ENCODE measurements at regions of chr6 and their contacts with region 1.

Region 1: DNA sequence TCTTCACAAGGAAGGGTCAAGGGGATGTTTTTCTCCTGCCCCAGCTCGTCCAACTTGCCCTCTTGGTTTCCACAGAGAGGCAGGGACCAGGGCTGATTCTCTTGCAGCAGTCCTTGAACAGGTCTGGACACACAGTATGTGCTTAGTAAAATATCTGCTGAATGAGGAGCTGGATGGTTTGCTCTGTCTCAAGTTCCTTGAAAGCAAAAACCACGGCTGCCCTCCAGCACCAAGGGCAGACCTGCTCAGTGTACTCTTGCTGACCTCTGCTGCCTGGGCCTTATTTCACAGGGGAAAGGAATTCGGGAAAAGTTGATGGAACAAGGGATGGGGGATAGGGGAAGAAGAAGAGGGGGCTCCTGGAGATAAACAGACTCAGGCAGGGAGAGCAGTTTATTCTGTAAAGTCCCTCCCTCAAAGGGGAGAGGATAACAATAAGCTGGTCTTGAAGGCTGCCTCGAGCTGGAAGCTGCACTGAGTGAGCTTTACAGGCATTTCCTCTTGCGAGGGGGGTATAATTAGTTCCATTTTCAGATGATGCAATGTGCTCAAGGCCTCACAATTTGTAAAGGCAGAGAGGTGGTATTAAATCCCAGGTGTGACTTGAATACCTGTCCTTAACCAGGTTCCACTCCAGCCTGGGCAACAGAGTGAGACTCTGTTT is 10.3 kb downstream of the KCNK5 start:
- DNase-seq: no peak
- ATAC-seq: peak; percentile 49
- H3K4me3 ChIP-seq: no peak overlapping the region
- H3K27ac ChIP-seq: peak overlapping the region; percentile 35
- H3K4me1 ChIP-seq: peaks cover 19% of the 10 kb centered on the region
- H3K27me3 ChIP-seq: no peaks in the 10 kb centered on the region
- CTCF ChIP-seq: peak in 1 of 3 experiments; percentile 21; a peak in 1 of 6 replicates
- EP300 ChIP-seq: no peak
- POLR2A ChIP-seq: no peak
- RAD21 ChIP-seq: no peak

Region 2: GRCh38 chr6:39104528-39104927 is 114.5 kb before region 1 on chr6:
- CTCF ChIA-PET with region 1: no interaction called
- POLR2A ChIA-PET with region 1: no interaction called
- RAD21 ChIA-PET with region 1: no interaction called
- SMC1A ChIA-PET with region 1: no interaction called
- in situ Hi-C with region 1: no loop called
- intact Hi-C with region 1: no loop called
- DNase-seq: no peak
- ATAC-seq: no peak
- H3K4me3 ChIP-seq: no peak overlapping the region
- H3K27ac ChIP-seq: no peak overlapping the region
- H3K4me1 ChIP-seq: no peaks in the 10 kb centered on the region
- H3K27me3 ChIP-seq: no peaks in the 10 kb centered on the region
- CTCF ChIP-seq: no peak
- EP300 ChIP-seq: no peak
- POLR2A ChIP-seq: no peak
- RAD21 ChIP-seq: no peak

Region 3: GRCh38 chr6:39203852-39204375 is 15.1 kb before region 1 on chr6:
- CTCF ChIA-PET with region 1: interaction called, 6 read pairs
- POLR2A ChIA-PET with region 1: interaction called, 13 read pairs
- RAD21 ChIA-PET with region 1: interaction called, 8 read pairs
- SMC1A ChIA-PET with region 1: interaction called, 13 read pairs
- in situ Hi-C with region 1: no loop called
- intact Hi-C with region 1: no loop called
- DNase-seq: no peak
- ATAC-seq: no peak
- H3K4me3 ChIP-seq: no peak overlapping the region
- H3K27ac ChIP-seq: no peak overlapping the region
- H3K4me1 ChIP-seq: peaks cover 4% of the 10 kb centered on the region
- H3K27me3 ChIP-seq: no peaks in the 10 kb centered on the region
- CTCF ChIP-seq: no peak
- EP300 ChIP-seq: no peak
- POLR2A ChIP-seq: no peak
- RAD21 ChIP-seq: no peak

Region 4: GRCh38 chr6:39228992-39229767 is 10.2 kb after region 1 on chr6 and contains the start of gene KCNK5:
- CTCF ChIA-PET with region 1: interaction called, 6 read pairs
- POLR2A ChIA-PET with region 1: interaction called, 8 read pairs
- RAD21 ChIA-PET with region 1: interaction called, 8 read pairs
- SMC1A ChIA-PET with region 1: interaction called, 32 read pairs
- in situ Hi-C with region 1: no loop called
- intact Hi-C with region 1: no loop called
- DNase-seq: no peak
- ATAC-seq: peak; percentile 87
- H3K4me3 ChIP-seq: peak within 1 kb of the TSS; percentile 57
- H3K27ac ChIP-seq: no peak within 1 kb of the TSS
- H3K4me1 ChIP-seq: peaks cover 8% of the 10 kb centered on the region; the same call in 1 of the 2 replicates
- H3K27me3 ChIP-seq: peaks cover 0 to 3% of the 10 kb centered on the region in 2 experiments; a peak in 3 of 4 replicates
- CTCF ChIP-seq: peak; percentile 24 to 62 (median 56); a peak in 5 of 6 replicates
- EP300 ChIP-seq: no peak
- POLR2A ChIP-seq: peak; percentile 88
- RAD21 ChIP-seq: 0 out of 2 replicates have a peak, but pooled peaks have one; percentile 6
- polyA plus RNA-seq, gene KCNK5: 0.11 to 0.27 TPM

Region 5: GRCh38 chr6:39347906-39348585 is 129.0 kb after region 1 on chr6:
- CTCF ChIA-PET with region 1: no interaction called
- POLR2A ChIA-PET with region 1: no interaction called
- RAD21 ChIA-PET with region 1: no interaction called
- SMC1A ChIA-PET with region 1: no interaction called
- in situ Hi-C with region 1: no loop called
- intact Hi-C with region 1: no loop called
- DNase-seq: no peak
- ATAC-seq: peak; percentile 96
- H3K4me3 ChIP-seq: no peak overlapping the region
- H3K27ac ChIP-seq: no peak overlapping the region
- H3K4me1 ChIP-seq: peaks cover 2% of the 10 kb centered on the region
- H3K27me3 ChIP-seq: no peaks in the 10 kb centered on the region
- CTCF ChIP-seq: peak; percentile 86 to 93 (median 92)
- EP300 ChIP-seq: no peak
- POLR2A ChIP-seq: no peak
- RAD21 ChIP-seq: peak; percentile 78

Region 6: GRCh38 chr6:39923414-39923813 is 704.4 kb after region 1 on chr6:
- CTCF ChIA-PET with region 1: no interaction called
- POLR2A ChIA-PET with region 1: no interaction called
- RAD21 ChIA-PET with region 1: no interaction called
- SMC1A ChIA-PET with region 1: no interaction called
- in situ Hi-C with region 1: no loop called
- intact Hi-C with region 1: no loop called
- DNase-seq: no peak
- ATAC-seq: no peak
- H3K4me3 ChIP-seq: no peak overlapping the region
- H3K27ac ChIP-seq: no peak overlapping the region
- H3K4me1 ChIP-seq: no peaks in the 10 kb centered on the region
- H3K27me3 ChIP-seq: no peaks in the 10 kb centered on the region
- CTCF ChIP-seq: no peak
- EP300 ChIP-seq: no peak
- POLR2A ChIP-seq: no peak
- RAD21 ChIP-seq: no peak

Measured in GM12878 (cell line).